Gastrocnemius medialis (tissue), 4 donors: ENCODE measurements at regions of chr18 and their contacts with region 1.

Region 1: GRCh38 chr18:53115876-53116585 is 776.0 kb downstream of the DCC start:
- DNase-seq: no peak
- ATAC-seq: no peak
- H3K4me3 ChIP-seq: no peak overlapping the region
- H3K27ac ChIP-seq: no peak overlapping the region
- H3K4me1 ChIP-seq: no peaks in the 10 kb centered on the region
- H3K27me3 ChIP-seq: no peaks in the 10 kb centered on the region
- CTCF ChIP-seq: no peak
- POLR2A ChIP-seq: no peak

Region 2: DNA sequence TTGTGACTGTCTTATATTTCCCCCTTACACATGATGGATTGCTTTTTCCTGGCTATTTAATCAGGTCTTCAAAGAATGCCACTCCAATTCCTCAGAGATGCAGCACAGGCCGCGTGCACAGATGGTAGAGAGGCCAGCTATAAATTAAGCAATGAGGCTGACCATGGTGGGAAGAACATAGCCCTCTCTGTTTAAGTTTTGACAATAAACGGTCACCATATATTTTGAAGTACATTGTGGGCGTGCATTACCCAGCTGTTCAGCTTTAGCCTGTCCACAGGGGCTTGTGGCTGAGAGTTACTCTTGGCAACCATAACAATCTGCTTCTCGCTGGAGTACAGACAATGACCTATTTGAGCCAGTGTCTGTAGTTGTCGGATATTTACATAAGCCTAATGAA is 45.2 kb before region 1 on chr18:
- in situ Hi-C with region 1: no loop called
- intact Hi-C with region 1: loop called (anchors 2 kb)
- DNase-seq: no peak
- ATAC-seq: no peak
- H3K4me3 ChIP-seq: no peak overlapping the region
- H3K27ac ChIP-seq: no peak overlapping the region
- H3K4me1 ChIP-seq: no peaks in the 10 kb centered on the region
- H3K27me3 ChIP-seq: no peaks in the 10 kb centered on the region
- CTCF ChIP-seq: no peak
- POLR2A ChIP-seq: no peak